CD4-positive, alpha-beta memory T cell (primary cell): ENCODE measurements at regions of chr14 and their contacts with region 1.

Region 1: GRCh38 chr14:100400115-100400514 is 77.0 kb downstream of the SLC25A47 start:
- DNase-seq: no peak
- H3K4me3 ChIP-seq: no peak overlapping the region
- H3K4me3 Mint-ChIP-seq: no peak overlapping the region
- H3K27ac ChIP-seq: no peak overlapping the region
- H3K27ac Mint-ChIP-seq: peak overlapping the region in 1 of 7 donors; percentile 20
- H3K4me1 ChIP-seq: peaks cover 7% of the 10 kb centered on the region
- H3K4me1 Mint-ChIP-seq: peaks cover 0 to 17% (median 8%) of the 10 kb centered on the region in 4 donors
- H3K27me3 ChIP-seq: no peaks in the 10 kb centered on the region
- H3K27me3 Mint-ChIP-seq: no peaks in the 10 kb centered on the region

Region 2: DNA sequence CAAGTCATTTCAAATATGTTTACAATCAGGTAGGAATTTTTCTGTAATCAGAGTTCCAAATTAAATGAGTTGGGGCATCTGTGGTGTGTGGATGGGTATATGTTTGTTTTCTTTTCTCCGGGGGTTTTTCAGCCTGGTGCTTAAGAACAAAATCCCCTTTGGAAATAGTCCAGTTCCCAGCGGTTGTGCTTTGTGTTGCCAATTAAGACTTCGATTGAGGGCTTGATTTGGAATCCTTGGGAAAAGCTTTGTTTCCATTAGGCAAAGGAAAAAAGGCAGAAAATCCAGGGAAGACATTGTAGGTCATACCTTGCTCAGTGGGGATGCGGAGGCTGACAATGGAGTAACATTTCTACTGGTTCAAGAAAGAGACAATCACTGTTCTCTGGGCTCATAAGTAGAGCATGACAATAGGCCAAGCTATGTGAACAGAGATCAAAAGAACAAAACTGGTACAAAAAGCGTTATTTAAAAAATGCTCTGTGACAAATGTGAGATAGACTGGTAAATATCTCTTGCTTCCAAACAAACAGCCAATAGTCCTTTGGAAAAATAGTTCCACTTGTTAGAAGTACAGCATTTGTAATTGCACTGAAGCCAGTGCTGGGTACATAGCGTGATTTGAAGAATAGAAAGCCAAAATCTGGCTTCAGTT is 527.2 kb before region 1 on chr14:
- CTCF ChIA-PET with region 1: no interaction called
- POLR2A ChIA-PET with region 1: no interaction called
- intact Hi-C with region 1: no loop called
- DNase-seq: no peak
- H3K4me3 ChIP-seq: no peak overlapping the region
- H3K4me3 Mint-ChIP-seq: no peak overlapping the region
- H3K27ac ChIP-seq: no peak overlapping the region
- H3K27ac Mint-ChIP-seq: no peak overlapping the region
- H3K4me1 ChIP-seq: no peaks in the 10 kb centered on the region
- H3K4me1 Mint-ChIP-seq: no peaks in the 10 kb centered on the region
- H3K27me3 ChIP-seq: no peaks in the 10 kb centered on the region
- H3K27me3 Mint-ChIP-seq: peaks cover 24 to 43% of the 10 kb centered on the region in 2 donors

Region 3: GRCh38 chr14:100383727-100384158 is 16.4 kb before region 1 on chr14:
- CTCF ChIA-PET with region 1: interaction called, 12 read pairs
- POLR2A ChIA-PET with region 1: no interaction called
- intact Hi-C with region 1: no loop called
- DNase-seq: peak; percentile 55 to 67 (median 63)
- H3K4me3 ChIP-seq: no peak overlapping the region
- H3K4me3 Mint-ChIP-seq: no peak overlapping the region
- H3K27ac ChIP-seq: no peak overlapping the region
- H3K27ac Mint-ChIP-seq: peak overlapping the region in 1 of 7 donors; percentile 17
- H3K4me1 ChIP-seq: no peaks in the 10 kb centered on the region
- H3K4me1 Mint-ChIP-seq: peaks cover 6 to 12% (median 8%) of the 10 kb centered on the region in 4 donors
- H3K27me3 ChIP-seq: no peaks in the 10 kb centered on the region
- H3K27me3 Mint-ChIP-seq: no peaks in the 10 kb centered on the region